ENCODE measurements at regions of chr1 and their contacts with region 1.

Region 1: GRCh38 chr1:32753532-32754312 is 51.2 kb upstream of the SYNC start:
- DNase-seq: peak; percentile 79
- H3K4me3 ChIP-seq: peak overlapping the region; percentile 39 to 61 (median 49)
- H3K27ac ChIP-seq: peak overlapping the region; percentile 88 to 93 (median 91)
- H3K4me1 ChIP-seq: peaks cover 18 to 56% (median 51%) of the 10 kb centered on the region in 4 donors
- H3K27me3 ChIP-seq: no peaks in the 10 kb centered on the region
- CTCF ChIP-seq: no peak
- EP300 ChIP-seq: no peak
- POLR2A ChIP-seq: peak; percentile 10

Region 2: DNA sequence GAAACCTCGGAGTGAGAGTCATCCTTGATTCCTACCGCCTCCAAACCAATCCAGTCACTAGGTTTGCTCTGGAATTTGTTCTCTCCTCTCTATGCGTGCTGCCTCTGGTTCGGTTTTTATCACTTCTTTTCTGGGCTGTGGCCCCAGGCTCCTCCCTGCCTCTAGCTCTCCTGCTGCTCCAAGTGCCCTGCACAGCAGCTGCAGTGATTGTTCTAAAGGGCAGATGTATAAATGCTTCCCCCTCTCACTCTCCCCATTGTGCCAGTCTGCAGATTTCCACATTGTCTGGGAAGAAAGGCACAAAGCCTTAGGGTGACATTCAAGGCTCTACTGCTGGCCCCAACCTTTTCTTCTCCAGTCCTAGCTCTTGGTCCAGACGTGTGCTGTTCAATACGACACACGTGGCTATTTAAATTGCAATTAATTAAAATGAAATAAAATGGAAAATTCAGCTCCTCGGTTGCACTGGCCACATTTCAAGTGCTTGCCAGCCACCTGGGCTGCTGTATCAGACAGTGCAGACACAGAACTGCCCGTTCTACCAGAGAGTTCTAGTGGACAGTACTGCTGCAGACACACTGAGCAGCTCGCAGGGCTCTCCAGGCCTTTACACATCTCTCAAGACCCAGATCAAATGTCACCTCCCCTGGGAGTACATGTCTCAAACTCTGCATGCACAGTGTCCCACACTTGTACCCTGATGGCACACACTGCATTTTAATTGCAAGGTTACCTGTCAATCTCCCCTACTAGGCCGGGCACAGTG is 415.8 kb after region 1 on chr1:
- in situ Hi-C with region 1: no loop called
- intact Hi-C with region 1: loop called (anchors 5 kb)
- DNase-seq: no peak
- H3K4me3 ChIP-seq: no peak overlapping the region
- H3K27ac ChIP-seq: no peak overlapping the region
- H3K4me1 ChIP-seq: no peaks in the 10 kb centered on the region
- H3K27me3 ChIP-seq: no peaks in the 10 kb centered on the region
- CTCF ChIP-seq: no peak
- EP300 ChIP-seq: no peak
- POLR2A ChIP-seq: no peak

Measured in transverse colon (tissue), 4 donors.